ENCODE measurements at regions of chr2 and their contacts with region 1.

Region 1: DNA sequence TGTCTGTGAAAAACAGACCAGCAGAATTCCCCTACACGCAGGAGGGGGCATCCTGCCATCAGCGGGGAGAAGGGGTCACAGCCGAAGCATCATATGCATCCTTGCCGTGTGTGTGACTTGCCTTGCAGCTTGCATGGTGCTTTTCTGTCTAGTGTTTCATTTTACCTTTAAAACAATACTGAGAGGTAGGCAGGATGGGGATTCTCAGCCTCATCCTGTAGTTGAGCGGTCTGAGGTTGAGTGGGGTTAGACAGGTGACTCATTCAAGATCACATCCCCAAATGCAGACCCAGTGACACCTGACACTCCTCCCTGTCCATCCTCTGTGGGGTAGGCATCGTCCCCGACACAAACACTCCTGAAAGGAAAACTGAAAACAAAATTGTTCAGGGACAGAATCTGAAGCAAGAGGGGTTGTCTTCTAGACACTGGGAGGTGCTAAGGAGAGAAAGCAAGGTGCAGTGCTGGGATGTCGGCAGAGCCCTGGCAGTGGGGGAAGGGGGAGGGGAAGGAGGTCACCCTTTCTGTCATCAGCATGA is 7.9 kb downstream of the ARL4C start:
- DNase-seq: peak; percentile 85
- H3K4me3 Mint-ChIP-seq: peak overlapping the region; percentile 77
- H3K27ac Mint-ChIP-seq: peak overlapping the region; percentile 97
- H3K4me1 Mint-ChIP-seq: peaks cover 89% of the 10 kb centered on the region
- H3K27me3 Mint-ChIP-seq: no peaks in the 10 kb centered on the region

Region 2: DNA sequence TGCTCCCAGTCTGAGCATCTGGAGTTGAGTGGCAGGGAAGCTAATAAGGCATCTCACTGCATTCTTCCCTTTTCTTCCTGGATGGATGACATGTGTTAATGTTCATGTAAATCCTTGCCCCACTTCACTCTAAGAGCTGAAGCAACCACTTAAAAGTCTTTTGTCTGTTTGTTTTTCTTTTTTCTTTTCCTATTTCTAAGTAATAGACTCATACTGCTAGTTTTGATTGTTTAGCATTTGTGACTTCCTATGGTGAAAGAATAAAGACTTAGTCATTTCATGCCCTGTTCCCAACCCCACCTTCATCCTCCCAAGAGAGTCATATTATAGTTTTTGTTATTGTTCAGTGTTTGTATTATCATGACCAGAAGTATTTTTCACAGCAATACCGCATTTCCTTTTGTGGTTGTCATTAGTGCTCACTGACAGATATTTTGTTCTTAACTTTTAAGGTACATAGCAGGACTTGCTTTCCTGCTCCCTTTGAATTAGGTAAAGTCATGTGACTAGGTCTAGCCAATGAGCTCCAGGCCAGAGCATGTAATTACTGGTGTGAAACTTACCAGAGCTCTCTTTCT is 456.6 kb before region 1 on chr2:
- CTCF ChIA-PET with region 1: no interaction called
- POLR2A ChIA-PET with region 1: no interaction called
- intact Hi-C with region 1: loop called (anchors 1 kb)
- DNase-seq: peak; percentile 55
- H3K4me3 Mint-ChIP-seq: no peak overlapping the region
- H3K27ac Mint-ChIP-seq: peak overlapping the region; percentile 47
- H3K4me1 Mint-ChIP-seq: peaks cover 41% of the 10 kb centered on the region
- H3K27me3 Mint-ChIP-seq: no peaks in the 10 kb centered on the region

Region 3: DNA sequence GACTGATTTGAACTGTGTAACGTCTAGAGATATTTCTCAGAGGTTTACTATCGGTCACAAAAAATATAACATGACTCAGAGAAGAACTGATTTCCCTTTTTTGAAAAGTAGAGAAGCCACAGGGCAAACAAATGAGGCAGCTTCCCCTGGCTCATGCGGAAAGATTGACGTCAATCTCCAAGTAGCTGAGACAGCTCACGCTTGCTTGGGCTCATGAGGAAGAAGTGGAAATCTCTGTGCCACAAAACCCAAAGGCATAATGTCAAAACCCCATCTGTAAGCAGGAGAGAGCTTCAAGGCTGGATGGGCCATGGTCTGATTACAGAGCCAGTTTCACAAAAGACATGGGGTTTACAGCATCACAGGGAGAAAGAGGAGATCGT is 180.2 kb before region 1 on chr2:
- CTCF ChIA-PET with region 1: no interaction called
- POLR2A ChIA-PET with region 1: interaction called, 4 read pairs
- intact Hi-C with region 1: loop called (anchors 1 kb)
- DNase-seq: peak; percentile 88
- H3K4me3 Mint-ChIP-seq: peak overlapping the region; percentile 38
- H3K27ac Mint-ChIP-seq: peak overlapping the region; percentile 89
- H3K4me1 Mint-ChIP-seq: peaks cover 56% of the 10 kb centered on the region
- H3K27me3 Mint-ChIP-seq: no peaks in the 10 kb centered on the region

Region 4: DNA sequence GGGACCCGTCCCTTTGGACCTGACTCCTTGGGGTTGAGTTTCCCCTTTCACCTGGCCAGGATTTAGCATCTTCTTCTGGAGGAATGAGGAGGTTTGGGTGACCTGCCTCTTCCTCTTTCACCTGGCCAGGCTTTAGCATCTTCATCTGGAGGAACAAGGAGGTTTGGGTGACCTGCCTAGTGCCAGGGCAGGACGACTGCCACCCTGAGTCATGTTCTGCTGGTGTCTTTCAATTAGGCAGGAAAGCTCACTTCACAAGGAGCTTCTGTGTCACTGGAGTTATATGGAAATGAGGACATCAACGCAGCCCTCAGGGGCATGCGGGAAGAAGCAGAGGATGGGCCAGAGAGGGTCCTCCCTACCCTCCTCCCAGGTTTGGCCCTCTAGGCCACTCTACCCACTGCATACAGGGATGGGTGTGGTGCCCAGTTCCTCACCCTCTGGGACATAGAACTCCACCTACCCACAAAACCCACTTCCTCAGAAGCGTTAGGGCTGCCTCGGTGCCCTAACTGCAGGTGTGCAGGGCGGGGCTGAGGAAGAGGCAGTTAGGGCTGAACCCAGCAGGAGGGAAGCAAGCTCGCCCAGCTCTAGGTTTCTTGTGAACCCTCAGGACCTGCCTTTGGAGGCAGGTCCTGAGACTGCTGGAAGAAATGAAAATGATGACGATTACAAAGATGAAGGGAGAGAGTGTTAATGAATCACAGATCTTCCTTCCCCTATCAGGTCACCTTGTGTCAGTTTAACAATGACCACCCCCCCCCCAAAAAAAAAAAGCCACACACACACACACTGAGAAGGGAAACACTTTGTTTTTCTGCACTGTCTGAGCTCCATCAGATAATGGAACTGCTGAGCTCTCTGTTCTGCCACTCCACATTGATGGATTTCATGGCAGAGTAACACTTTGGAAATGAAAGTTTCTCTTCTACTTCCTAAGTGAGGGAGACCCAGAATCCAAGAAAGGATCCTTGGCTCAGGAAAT is 63.1 kb before region 1 on chr2:
- CTCF ChIA-PET with region 1: no interaction called
- POLR2A ChIA-PET with region 1: interaction called, 5 read pairs
- intact Hi-C with region 1: loop called (anchors 1 kb)
- DNase-seq: peak; percentile 78
- H3K4me3 Mint-ChIP-seq: peak overlapping the region; percentile 73
- H3K27ac Mint-ChIP-seq: peak overlapping the region; percentile 81
- H3K4me1 Mint-ChIP-seq: peaks cover 79% of the 10 kb centered on the region
- H3K27me3 Mint-ChIP-seq: no peaks in the 10 kb centered on the region

Region 5: DNA sequence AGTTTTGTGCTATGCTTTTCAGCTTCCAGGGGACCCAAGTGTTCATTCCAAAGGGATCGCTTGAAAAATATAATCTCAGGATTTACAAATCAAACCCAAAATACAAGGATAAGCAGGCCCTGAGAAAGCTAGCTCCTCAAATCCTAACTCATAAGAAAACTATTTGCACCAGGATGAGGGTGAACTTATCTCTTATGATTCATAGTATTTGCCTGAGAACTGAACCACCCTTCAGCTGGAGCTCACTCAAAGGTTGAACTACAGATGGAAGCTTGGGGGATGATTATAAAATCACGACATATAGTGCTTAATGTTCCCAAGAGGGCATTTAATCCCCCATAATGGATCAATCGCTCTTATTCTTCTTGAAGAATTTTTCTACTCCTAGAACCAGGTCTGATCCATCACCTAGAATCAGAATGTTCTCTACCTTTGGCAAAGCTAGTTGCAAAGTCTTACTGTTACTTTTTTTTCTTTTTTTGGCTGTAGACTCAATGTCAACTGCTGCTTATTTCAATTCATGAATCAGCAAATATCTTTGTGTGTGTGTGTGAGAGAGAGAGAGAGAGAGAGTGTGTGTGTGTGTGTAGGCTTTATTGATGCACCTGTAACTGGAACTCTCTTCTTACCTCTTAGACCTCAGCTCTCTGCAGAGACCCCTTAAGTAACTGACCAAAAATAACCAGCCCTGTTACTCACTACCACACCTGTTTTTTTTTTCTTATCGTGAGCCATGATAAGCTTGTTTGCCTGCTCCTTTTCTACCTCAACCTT is 36.9 kb before region 1 on chr2:
- CTCF ChIA-PET with region 1: interaction called, 6 read pairs
- POLR2A ChIA-PET with region 1: interaction called, 13 read pairs
- intact Hi-C with region 1: loop called (anchors 1 kb)
- DNase-seq: no peak
- H3K4me3 Mint-ChIP-seq: peak overlapping the region; percentile 72
- H3K27ac Mint-ChIP-seq: peak overlapping the region; percentile 88
- H3K4me1 Mint-ChIP-seq: peaks cover 78% of the 10 kb centered on the region
- H3K27me3 Mint-ChIP-seq: no peaks in the 10 kb centered on the region

Region 6: GRCh38 chr2:234474654-234475053 is 14.3 kb before region 1 on chr2:
- CTCF ChIA-PET with region 1: interaction called, 5 read pairs
- POLR2A ChIA-PET with region 1: interaction called, 4 read pairs
- intact Hi-C with region 1: loop called (anchors 1 kb)
- DNase-seq: no peak
- H3K4me3 Mint-ChIP-seq: no peak overlapping the region
- H3K27ac Mint-ChIP-seq: peak overlapping the region; percentile 88
- H3K4me1 Mint-ChIP-seq: peaks cover 57% of the 10 kb centered on the region
- H3K27me3 Mint-ChIP-seq: no peaks in the 10 kb centered on the region